Ascending aorta (tissue), 2 donors: ENCODE measurements at regions of chr19 and their contacts with region 1.

Region 1: DNA sequence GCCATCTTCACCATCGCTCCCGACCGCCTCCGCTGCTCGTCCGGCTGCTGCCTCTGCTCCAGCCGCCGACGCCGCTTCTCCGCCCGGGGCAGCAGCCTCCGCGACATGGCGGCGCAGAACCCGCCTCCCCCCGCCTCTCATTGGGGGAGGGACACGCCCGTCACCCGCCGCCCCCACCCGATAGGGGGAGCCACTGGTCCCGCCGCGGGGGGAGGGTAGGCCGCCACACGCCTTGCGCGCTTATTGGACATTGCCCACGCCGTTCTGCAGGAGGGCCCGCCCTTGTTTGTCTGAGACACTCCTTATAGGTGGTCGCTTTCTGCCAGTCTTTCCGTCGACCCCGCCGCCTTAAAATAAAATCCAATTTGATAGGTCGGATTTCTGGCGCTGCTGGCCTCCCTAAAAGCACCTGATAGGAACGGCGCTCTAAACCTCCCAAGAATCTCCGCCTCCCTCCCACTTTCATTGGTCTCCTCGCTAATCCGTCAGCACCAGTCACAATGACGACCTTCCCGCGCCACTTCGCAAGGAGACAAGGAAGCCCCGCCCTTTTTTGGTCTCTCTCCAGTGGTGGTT is at the start of gene HNRNPL:
- DNase-seq: peak in 1 of 2 donors; percentile 100
- H3K4me3 ChIP-seq: peak within 1 kb of the TSS; percentile 81 to 98
- H3K27ac ChIP-seq: peak within 1 kb of the TSS; percentile 98 to 100
- H3K4me1 ChIP-seq: peaks cover 16 to 41% of the 10 kb centered on the region in 2 donors
- H3K27me3 ChIP-seq: no peaks in the 10 kb centered on the region
- CTCF ChIP-seq: peak; percentile 2 to 34 (median 31)
- total RNA-seq, gene HNRNPL: 110 TPM

Region 2: GRCh38 chr19:38387550-38388348 is 462.2 kb before region 1 on chr19 and contains the start of gene GGN:
- intact Hi-C with region 1: loop called (anchors 5 kb)
- DNase-seq: peak; percentile 75 to 95
- H3K4me3 ChIP-seq: peak within 1 kb of the TSS; percentile 58 to 94
- H3K27ac ChIP-seq: peak within 1 kb of the TSS; percentile 91 to 97
- H3K4me1 ChIP-seq: peaks cover 6 to 20% of the 10 kb centered on the region in 2 donors
- H3K27me3 ChIP-seq: no peaks in the 10 kb centered on the region
- CTCF ChIP-seq: no peak
- total RNA-seq, gene GGN: 46.9 TPM

Region 3: DNA sequence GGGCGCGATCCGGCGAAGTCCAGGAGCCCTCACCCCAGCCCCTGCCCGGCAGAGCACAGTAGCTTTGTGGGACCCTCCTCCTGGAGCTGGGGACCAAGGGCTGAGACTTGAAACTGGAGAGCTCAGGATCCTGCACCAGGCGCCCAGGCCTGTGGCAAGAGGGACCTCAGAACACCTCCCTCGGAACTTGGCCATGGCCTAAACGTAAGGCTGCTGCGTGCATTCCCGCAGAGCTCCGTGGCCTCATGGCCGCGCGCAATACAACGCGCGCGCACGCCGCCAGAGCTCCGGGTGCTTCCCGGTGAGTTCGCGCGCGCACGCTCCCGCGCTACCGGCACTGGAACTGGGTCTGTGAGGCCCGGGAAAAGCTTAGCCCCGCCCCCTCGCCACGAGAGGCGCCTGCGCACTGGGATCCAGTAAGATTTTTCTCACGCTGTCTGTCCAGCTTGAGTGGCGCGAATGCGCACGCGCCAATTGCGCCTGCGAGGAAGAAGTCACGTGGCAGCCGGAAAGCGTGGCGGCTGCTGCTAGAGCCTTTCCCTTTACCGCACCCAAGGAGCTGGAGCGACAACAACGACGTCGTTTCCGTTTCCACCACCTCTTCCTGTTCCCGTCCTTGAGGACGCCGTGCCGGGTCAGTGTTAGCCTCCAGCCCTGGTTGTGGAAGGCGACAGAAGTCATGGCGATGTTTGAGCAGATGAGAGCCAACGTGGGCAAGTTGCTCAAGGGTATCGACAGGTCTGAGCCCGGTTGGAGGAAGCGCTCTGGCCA is 231.2 kb before region 1 on chr19 and contains the start of gene EIF3K:
- intact Hi-C with region 1: loop called (anchors 2 kb)
- DNase-seq: peak; percentile 97 to 99
- H3K4me3 ChIP-seq: peak within 1 kb of the TSS; percentile 75 to 91
- H3K27ac ChIP-seq: peak within 1 kb of the TSS; percentile 87 to 88
- H3K4me1 ChIP-seq: peaks cover 9 to 10% of the 10 kb centered on the region in 2 donors
- H3K27me3 ChIP-seq: no peaks in the 10 kb centered on the region
- CTCF ChIP-seq: no peak
- total RNA-seq, gene EIF3K: 696 TPM

Region 4: DNA sequence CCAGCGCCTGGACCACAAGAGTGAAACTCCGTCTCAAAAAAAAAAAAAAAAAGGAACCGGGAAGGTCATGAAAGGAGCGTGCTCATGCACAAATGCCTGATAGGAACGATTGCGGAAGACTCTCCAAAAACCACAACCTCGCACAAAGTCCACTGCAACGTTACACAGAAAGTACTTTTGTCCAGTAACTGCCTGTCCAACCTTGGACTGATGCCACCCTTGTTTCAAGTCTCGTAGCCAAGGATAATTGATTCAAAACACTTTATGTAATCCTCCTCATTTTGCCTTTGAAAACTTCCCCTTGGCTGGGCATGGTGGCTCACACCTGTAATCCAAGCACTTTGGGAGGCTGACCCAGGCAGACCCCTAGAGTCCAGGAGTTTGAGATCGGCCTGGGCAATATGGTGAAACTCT is 90.4 kb before region 1 on chr19:
- intact Hi-C with region 1: no loop called
- DNase-seq: no peak
- H3K4me3 ChIP-seq: no peak overlapping the region
- H3K27ac ChIP-seq: no peak overlapping the region
- H3K4me1 ChIP-seq: no peaks in the 10 kb centered on the region
- H3K27me3 ChIP-seq: no peaks in the 10 kb centered on the region
- CTCF ChIP-seq: no peak

Region 5: GRCh38 chr19:38831142-38831605 is 18.8 kb before region 1 on chr19:
- intact Hi-C with region 1: loop called (anchors 1 kb)
- DNase-seq: peak; percentile 45 to 89
- H3K4me3 ChIP-seq: peak overlapping the region; percentile 71 to 77
- H3K27ac ChIP-seq: peak overlapping the region; percentile 82 to 91
- H3K4me1 ChIP-seq: peaks cover 6 to 25% of the 10 kb centered on the region in 2 donors
- H3K27me3 ChIP-seq: no peaks in the 10 kb centered on the region
- CTCF ChIP-seq: no peak

Region 6: DNA sequence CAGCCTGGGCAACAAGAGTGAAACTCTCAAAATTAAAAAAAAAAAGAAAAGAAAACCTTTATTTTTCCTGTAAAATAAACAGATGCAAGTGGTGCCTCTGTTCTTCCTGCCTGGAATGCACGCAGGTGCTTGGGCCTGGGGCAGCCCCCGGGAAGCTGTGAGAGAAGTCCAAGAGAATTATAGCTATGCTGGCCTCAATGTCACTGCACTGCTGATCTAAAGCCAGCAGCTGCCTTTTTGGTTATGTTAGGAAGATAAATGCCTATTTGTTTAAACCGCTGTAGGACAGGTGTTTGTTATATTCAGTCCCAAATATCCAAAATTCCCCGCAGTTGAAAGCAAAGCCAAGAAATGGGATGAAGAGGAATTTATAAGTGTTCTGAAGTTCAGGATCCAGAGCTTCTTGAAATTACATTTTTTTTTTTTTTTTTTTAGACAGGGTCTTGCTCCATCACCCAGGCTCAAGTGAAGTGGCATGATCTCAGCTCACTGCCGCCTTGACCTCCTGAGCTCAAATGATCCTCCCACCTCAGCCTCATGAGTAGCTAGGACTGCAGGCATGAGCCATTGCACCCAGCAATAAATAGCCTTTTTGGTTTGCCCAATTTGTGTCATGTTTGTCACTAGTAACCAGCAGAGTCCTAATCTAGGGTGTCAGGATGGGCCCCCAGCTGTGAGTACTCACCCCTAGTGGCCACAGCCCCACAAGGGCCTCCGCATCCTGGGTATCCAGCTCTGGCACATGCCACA is 25.9 kb after region 1 on chr19:
- intact Hi-C with region 1: no loop called
- DNase-seq: no peak
- H3K4me3 ChIP-seq: no peak overlapping the region
- H3K27ac ChIP-seq: no peak overlapping the region
- H3K4me1 ChIP-seq: no peaks in the 10 kb centered on the region
- H3K27me3 ChIP-seq: no peaks in the 10 kb centered on the region
- CTCF ChIP-seq: no peak

Region 7: GRCh38 chr19:38929929-38930775 is 80.2 kb after region 1 on chr19 and contains the start of gene SARS2:
- intact Hi-C with region 1: loop called (anchors 1 kb)
- DNase-seq: peak; percentile 62 to 97
- H3K4me3 ChIP-seq: peak within 1 kb of the TSS; percentile 83 to 93
- H3K27ac ChIP-seq: peak within 1 kb of the TSS; percentile 70 to 77
- H3K4me1 ChIP-seq: peaks cover 9 to 14% of the 10 kb centered on the region in 2 donors
- H3K27me3 ChIP-seq: no peaks in the 10 kb centered on the region
- CTCF ChIP-seq: peak; percentile 98 to 99 (median 98)
- total RNA-seq, gene SARS2: 1.4 TPM